CD4-positive, alpha-beta T cell (primary cell): ENCODE measurements at regions of chr11 and their contacts with region 1.

Region 1: GRCh38 chr11:86068951-86069407 is at the start of gene PICALM:
- DNase-seq: peak; percentile 92 to 100 (median 96)
- ATAC-seq: peak; percentile 91
- H3K4me3 ChIP-seq: peak within 1 kb of the TSS; percentile 80
- H3K4me3 Mint-ChIP-seq: peak within 1 kb of the TSS; percentile 87
- H3K27ac ChIP-seq: peak within 1 kb of the TSS; percentile 75 to 92
- H3K27ac Mint-ChIP-seq: peak within 1 kb of the TSS; percentile 82
- H3K4me1 ChIP-seq: peaks cover 21% of the 10 kb centered on the region
- H3K4me1 Mint-ChIP-seq: peaks cover 41% of the 10 kb centered on the region
- H3K27me3 ChIP-seq: no peaks in the 10 kb centered on the region
- H3K27me3 Mint-ChIP-seq: no peaks in the 10 kb centered on the region
- CTCF ChIP-seq: no peak
- total RNA-seq, gene PICALM: 73.3 to 77.3 TPM

Region 2: DNA sequence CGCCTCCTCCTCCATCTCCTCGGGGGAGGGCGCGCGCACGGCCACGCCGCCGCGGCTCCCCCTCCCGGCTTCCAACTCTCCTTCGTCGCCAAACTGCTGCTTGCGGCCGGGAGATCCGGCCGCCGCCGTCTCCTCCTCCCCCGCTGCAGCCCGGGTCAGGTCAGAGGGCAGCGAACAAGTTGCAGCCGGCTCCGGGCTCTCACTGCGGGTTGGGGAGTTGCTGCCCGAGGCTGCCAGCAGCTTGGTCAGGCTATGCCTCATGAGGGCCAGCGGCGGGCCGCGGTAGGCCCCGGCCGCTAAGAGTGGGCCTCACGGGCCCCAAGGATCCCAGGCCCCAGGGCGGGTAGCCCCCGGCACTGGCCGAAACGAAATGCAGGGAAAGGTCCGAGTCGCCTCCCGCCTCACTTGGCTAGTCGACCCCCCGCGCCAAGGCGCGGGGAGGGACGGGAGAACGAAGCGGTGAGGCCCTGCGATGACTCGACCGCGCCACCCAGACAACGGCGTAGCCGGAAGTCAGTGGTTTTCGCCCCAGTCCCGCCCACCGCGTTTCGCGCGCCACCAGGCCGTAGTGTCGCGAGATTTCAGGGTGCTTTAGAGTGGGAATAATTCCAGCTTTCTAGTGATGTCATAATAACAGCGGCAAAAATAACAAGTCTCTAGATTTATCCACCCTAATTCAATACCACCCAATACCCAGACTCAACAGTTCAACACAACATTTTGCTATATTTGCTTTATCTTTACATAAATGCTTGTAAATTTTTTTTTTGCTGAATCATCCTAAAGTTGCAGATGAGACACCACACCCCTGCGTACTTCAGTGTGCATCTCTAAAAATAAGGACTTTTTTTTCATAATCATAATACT is 404.1 kb before region 1 on chr11 and contains the start of gene CREBZF:
- CTCF ChIA-PET with region 1: no interaction called
- POLR2A ChIA-PET with region 1: interaction called, 5 read pairs
- intact Hi-C with region 1: loop called (anchors 5 to 10 kb)
- DNase-seq: peak; percentile 86 to 95 (median 90)
- ATAC-seq: peak; percentile 62
- H3K4me3 ChIP-seq: peak within 1 kb of the TSS; percentile 94
- H3K4me3 Mint-ChIP-seq: peak within 1 kb of the TSS; percentile 100
- H3K27ac ChIP-seq: peak within 1 kb of the TSS; percentile 97 to 99
- H3K27ac Mint-ChIP-seq: peak within 1 kb of the TSS; percentile 100
- H3K4me1 ChIP-seq: peaks cover 14% of the 10 kb centered on the region
- H3K4me1 Mint-ChIP-seq: peaks cover 58% of the 10 kb centered on the region
- H3K27me3 ChIP-seq: no peaks in the 10 kb centered on the region
- H3K27me3 Mint-ChIP-seq: no peaks in the 10 kb centered on the region
- CTCF ChIP-seq: no peak
- total RNA-seq, gene CREBZF: 54.8 to 55.9 TPM

Region 3: GRCh38 chr11:85759915-85760314 is 309.1 kb before region 1 on chr11:
- CTCF ChIA-PET with region 1: no interaction called
- POLR2A ChIA-PET with region 1: no interaction called
- intact Hi-C with region 1: loop called in 1 of 2 experiments (anchors 10 kb)
- DNase-seq: no peak
- ATAC-seq: no peak
- H3K4me3 ChIP-seq: no peak overlapping the region
- H3K4me3 Mint-ChIP-seq: no peak overlapping the region
- H3K27ac ChIP-seq: no peak overlapping the region
- H3K27ac Mint-ChIP-seq: no peak overlapping the region
- H3K4me1 ChIP-seq: peaks cover 41% of the 10 kb centered on the region
- H3K4me1 Mint-ChIP-seq: peaks cover 69% of the 10 kb centered on the region
- H3K27me3 ChIP-seq: no peaks in the 10 kb centered on the region
- H3K27me3 Mint-ChIP-seq: no peaks in the 10 kb centered on the region
- CTCF ChIP-seq: no peak

Region 4: GRCh38 chr11:86052693-86053641 is 16.0 kb before region 1 on chr11:
- CTCF ChIA-PET with region 1: interaction called, 3 read pairs
- POLR2A ChIA-PET with region 1: interaction called, 27 read pairs
- intact Hi-C with region 1: no loop called
- DNase-seq: no peak
- ATAC-seq: no peak
- H3K4me3 ChIP-seq: no peak overlapping the region
- H3K4me3 Mint-ChIP-seq: peak overlapping the region; percentile 12
- H3K27ac ChIP-seq: peak overlapping the region in 1 of 2 donors; percentile 35
- H3K27ac Mint-ChIP-seq: peak overlapping the region; percentile 21
- H3K4me1 ChIP-seq: peaks cover 49% of the 10 kb centered on the region
- H3K4me1 Mint-ChIP-seq: peaks cover 84% of the 10 kb centered on the region
- H3K27me3 ChIP-seq: no peaks in the 10 kb centered on the region
- H3K27me3 Mint-ChIP-seq: no peaks in the 10 kb centered on the region
- CTCF ChIP-seq: no peak

Region 5: GRCh38 chr11:86193297-86194095 is 124.5 kb after region 1 on chr11:
- CTCF ChIA-PET with region 1: interaction called, 6 read pairs
- POLR2A ChIA-PET with region 1: interaction called, 22 read pairs
- intact Hi-C with region 1: no loop called
- DNase-seq: peak; percentile 18 to 84 (median 42)
- ATAC-seq: peak; percentile 100
- H3K4me3 ChIP-seq: peak overlapping the region; percentile 37
- H3K4me3 Mint-ChIP-seq: peak overlapping the region; percentile 94
- H3K27ac ChIP-seq: no peak overlapping the region
- H3K27ac Mint-ChIP-seq: peak overlapping the region; percentile 69
- H3K4me1 ChIP-seq: peaks cover 4% of the 10 kb centered on the region
- H3K4me1 Mint-ChIP-seq: peaks cover 15% of the 10 kb centered on the region
- H3K27me3 ChIP-seq: no peaks in the 10 kb centered on the region
- H3K27me3 Mint-ChIP-seq: no peaks in the 10 kb centered on the region
- CTCF ChIP-seq: peak; percentile 74

Region 6: DNA sequence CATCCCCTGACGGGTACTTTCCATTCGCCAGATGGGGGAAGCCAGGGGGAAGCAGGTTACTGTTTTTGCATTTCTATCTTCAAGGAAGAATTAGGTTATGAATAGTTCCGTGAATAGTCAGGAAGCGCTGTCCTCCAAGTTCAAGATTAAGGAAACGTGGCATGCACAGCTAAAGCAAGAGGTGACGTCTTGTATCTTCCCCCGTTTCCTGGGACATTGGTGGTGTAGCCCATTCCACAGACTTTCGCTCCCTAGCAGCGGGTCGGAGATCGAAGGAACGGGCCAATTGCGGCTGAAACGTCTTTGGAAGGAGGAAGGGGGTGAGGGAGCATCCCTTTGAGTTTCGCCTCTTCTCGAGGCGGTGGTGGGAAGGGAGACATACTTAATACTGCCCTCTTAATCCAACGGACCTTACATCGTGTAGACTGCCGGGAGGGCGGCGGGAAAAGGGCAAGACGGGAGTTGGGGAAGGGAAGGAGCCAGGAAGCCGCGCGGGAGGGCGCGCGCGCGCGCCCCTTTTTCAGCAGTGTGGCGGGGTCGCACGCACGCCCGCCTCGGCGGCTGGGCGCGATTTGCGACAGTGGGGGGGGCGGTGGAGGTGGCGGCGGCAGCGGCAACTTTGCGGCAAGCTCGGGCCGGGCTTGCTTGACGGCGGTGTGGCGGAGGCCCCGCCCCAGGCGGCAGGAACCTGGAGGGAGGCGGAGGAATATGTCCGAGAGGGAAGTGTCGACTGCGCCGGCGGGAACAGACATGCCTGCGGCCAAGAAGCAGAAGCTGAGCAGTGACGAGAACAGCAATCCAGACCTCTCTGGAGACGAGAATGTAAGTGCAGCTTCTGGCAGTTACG is 175.8 kb after region 1 on chr11 and contains the start of gene EED:
- CTCF ChIA-PET with region 1: interaction called, 3 read pairs
- POLR2A ChIA-PET with region 1: interaction called, 16 read pairs
- intact Hi-C with region 1: loop called (anchors 2 kb)
- DNase-seq: peak; percentile 86 to 97 (median 93)
- ATAC-seq: peak; percentile 83
- H3K4me3 ChIP-seq: peak within 1 kb of the TSS; percentile 82
- H3K4me3 Mint-ChIP-seq: no peak within 1 kb of the TSS
- H3K27ac ChIP-seq: peak within 1 kb of the TSS; percentile 99
- H3K27ac Mint-ChIP-seq: no peak within 1 kb of the TSS
- H3K4me1 ChIP-seq: peaks cover 4% of the 10 kb centered on the region
- H3K4me1 Mint-ChIP-seq: no peaks in the 10 kb centered on the region
- H3K27me3 ChIP-seq: no peaks in the 10 kb centered on the region
- H3K27me3 Mint-ChIP-seq: no peaks in the 10 kb centered on the region
- CTCF ChIP-seq: no peak
- total RNA-seq, gene EED: 32.1 to 35.4 TPM

Region 7: GRCh38 chr11:86537541-86538222 is 468.7 kb after region 1 on chr11:
- CTCF ChIA-PET with region 1: no interaction called
- POLR2A ChIA-PET with region 1: no interaction called
- intact Hi-C with region 1: no loop called
- DNase-seq: no peak
- ATAC-seq: no peak
- H3K4me3 ChIP-seq: no peak overlapping the region
- H3K4me3 Mint-ChIP-seq: no peak overlapping the region
- H3K27ac ChIP-seq: no peak overlapping the region
- H3K27ac Mint-ChIP-seq: no peak overlapping the region
- H3K4me1 ChIP-seq: no peaks in the 10 kb centered on the region
- H3K4me1 Mint-ChIP-seq: no peaks in the 10 kb centered on the region
- H3K27me3 ChIP-seq: no peaks in the 10 kb centered on the region
- H3K27me3 Mint-ChIP-seq: no peaks in the 10 kb centered on the region
- CTCF ChIP-seq: no peak

Region 8: GRCh38 chr11:87037450-87038234 is 968.7 kb after region 1 on chr11 and contains the start of gene TMEM135:
- CTCF ChIA-PET with region 1: no interaction called
- POLR2A ChIA-PET with region 1: no interaction called
- intact Hi-C with region 1: loop called in 1 of 2 experiments (anchors 10 kb)
- DNase-seq: peak; percentile 81 to 95 (median 90)
- ATAC-seq: peak; percentile 95
- H3K4me3 ChIP-seq: peak within 1 kb of the TSS; percentile 95
- H3K4me3 Mint-ChIP-seq: peak within 1 kb of the TSS; percentile 96
- H3K27ac ChIP-seq: peak within 1 kb of the TSS; percentile 39 to 73
- H3K27ac Mint-ChIP-seq: peak within 1 kb of the TSS; percentile 85
- H3K4me1 ChIP-seq: peaks cover 20% of the 10 kb centered on the region
- H3K4me1 Mint-ChIP-seq: peaks cover 57% of the 10 kb centered on the region
- H3K27me3 ChIP-seq: no peaks in the 10 kb centered on the region
- H3K27me3 Mint-ChIP-seq: no peaks in the 10 kb centered on the region
- CTCF ChIP-seq: no peak
- total RNA-seq, gene TMEM135: 14.1 to 15.6 TPM